ENCODE measurements at regions of chr11 and their contacts with region 1.

Region 1: DNA sequence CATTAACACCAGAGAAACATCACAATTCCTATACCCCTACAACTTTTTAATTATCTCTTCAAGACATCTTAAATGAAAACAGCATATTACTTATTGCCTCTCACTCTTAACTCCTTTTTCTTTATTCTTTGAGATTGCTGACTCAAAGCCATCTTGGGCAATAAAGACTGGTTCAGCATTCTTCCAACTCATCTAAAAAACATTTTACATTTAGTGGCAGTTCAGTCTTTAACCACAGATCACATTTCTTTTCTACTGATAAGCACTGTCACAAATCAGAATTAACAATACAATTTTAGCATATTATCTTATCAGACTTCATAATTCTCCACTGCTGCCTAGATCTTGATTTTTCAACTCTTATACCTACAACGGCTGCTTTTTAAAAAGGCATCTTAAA is 34.0 kb downstream of the SIK3 start:
- DNase-seq: no peak
- ATAC-seq: no peak
- H3K4me3 ChIP-seq: no peak overlapping the region
- H3K4me3 Mint-ChIP-seq: no peak overlapping the region
- H3K27ac ChIP-seq: no peak overlapping the region
- H3K27ac Mint-ChIP-seq: no peak overlapping the region
- H3K4me1 ChIP-seq: peaks cover 16% of the 10 kb centered on the region
- H3K4me1 Mint-ChIP-seq: peaks cover 74% of the 10 kb centered on the region
- H3K27me3 ChIP-seq: no peaks in the 10 kb centered on the region
- H3K27me3 Mint-ChIP-seq: no peaks in the 10 kb centered on the region
- CTCF ChIP-seq: no peak

Region 2: DNA sequence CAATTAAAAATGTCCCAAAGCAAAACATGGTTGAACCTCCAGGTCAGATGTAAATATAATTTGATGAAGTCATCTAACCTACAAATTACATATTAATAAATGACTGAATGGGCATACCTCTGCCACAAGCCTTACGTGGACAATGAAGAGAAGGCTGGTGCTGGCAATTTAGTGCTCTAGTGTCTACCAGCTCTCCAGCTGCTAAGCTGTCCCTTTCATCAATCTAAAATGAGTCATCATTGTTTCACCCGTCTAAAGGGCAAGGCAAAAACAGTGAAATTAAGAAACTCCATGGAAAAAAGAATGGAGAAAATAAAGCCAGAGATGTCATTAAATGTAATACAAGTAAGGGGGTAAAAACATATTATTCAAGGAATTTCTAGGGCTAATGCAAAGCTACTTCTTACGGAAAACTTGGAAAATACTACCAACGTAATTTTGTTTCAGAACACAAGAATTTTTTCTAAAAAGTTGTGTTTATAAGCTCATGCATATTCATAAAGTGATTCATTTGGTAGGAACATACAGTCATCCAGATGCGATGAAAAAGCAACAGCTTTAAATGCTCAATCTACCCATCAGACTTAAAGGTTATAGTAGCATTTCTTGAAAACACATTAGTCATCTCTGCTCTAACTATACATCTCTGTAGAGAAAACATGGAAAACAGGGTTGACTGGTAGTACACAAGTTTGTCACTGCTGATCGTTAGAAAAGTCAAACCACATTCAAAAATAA is 37.5 kb before region 1 on chr11:
- CTCF ChIA-PET with region 1: no interaction called
- POLR2A ChIA-PET with region 1: no interaction called
- intact Hi-C with region 1: loop called in 1 of 2 experiments (anchors 5 kb)
- DNase-seq: no peak
- ATAC-seq: no peak
- H3K4me3 ChIP-seq: no peak overlapping the region
- H3K4me3 Mint-ChIP-seq: no peak overlapping the region
- H3K27ac ChIP-seq: no peak overlapping the region
- H3K27ac Mint-ChIP-seq: no peak overlapping the region
- H3K4me1 ChIP-seq: peaks cover 28% of the 10 kb centered on the region
- H3K4me1 Mint-ChIP-seq: peaks cover 67% of the 10 kb centered on the region
- H3K27me3 ChIP-seq: no peaks in the 10 kb centered on the region
- H3K27me3 Mint-ChIP-seq: no peaks in the 10 kb centered on the region
- CTCF ChIP-seq: no peak

Region 3: DNA sequence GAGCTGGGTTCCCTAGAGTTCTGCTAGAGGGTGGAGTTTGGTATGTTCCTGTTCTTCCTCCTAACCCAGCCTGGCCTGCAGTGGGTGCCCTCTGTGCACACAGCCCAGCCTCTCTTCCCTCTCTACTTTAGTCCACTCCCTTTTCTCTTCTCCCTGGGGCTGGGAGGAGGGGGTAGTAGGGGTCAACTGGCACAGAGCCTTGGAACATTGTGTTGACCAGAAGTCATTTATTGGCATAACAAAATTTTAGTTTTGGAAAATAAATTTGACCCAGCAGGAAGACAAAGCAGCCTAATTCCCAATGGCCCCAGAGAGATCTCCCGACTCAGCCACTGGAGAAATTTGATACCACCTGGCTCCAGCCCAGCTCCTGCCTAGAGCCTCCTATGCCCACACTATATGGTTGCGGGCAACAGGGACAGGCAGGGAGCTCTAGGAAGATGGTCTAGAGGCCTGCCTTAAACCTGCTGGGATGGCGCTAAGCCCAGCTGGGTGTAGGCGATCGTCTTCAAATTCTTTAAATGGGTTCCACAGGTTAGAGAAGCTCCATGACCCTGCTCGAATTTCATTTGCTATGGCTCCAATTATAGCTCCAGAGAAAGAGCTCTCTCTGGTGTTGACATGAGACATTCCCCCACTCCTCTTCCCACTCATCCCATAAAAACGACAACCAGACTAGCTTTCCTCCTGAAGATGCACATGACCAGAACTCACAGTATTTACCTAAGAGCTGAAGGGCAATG is 157.7 kb after region 1 on chr11:
- CTCF ChIA-PET with region 1: no interaction called
- POLR2A ChIA-PET with region 1: no interaction called
- intact Hi-C with region 1: no loop called
- DNase-seq: no peak
- ATAC-seq: no peak
- H3K4me3 ChIP-seq: no peak overlapping the region
- H3K4me3 Mint-ChIP-seq: no peak overlapping the region
- H3K27ac ChIP-seq: no peak overlapping the region
- H3K27ac Mint-ChIP-seq: no peak overlapping the region
- H3K4me1 ChIP-seq: peaks cover 21% of the 10 kb centered on the region
- H3K4me1 Mint-ChIP-seq: peaks cover 9% of the 10 kb centered on the region
- H3K27me3 ChIP-seq: no peaks in the 10 kb centered on the region
- H3K27me3 Mint-ChIP-seq: no peaks in the 10 kb centered on the region
- CTCF ChIP-seq: no peak

Measured in CD4-positive, alpha-beta T cell (primary cell).